Activated naive CD4-positive, alpha-beta T cell treated with anti-CD3 and anti-CD28 coated beads for 36 hours (primary cell): ENCODE measurements at regions of chr14 and their contacts with region 1.

Region 1: DNA sequence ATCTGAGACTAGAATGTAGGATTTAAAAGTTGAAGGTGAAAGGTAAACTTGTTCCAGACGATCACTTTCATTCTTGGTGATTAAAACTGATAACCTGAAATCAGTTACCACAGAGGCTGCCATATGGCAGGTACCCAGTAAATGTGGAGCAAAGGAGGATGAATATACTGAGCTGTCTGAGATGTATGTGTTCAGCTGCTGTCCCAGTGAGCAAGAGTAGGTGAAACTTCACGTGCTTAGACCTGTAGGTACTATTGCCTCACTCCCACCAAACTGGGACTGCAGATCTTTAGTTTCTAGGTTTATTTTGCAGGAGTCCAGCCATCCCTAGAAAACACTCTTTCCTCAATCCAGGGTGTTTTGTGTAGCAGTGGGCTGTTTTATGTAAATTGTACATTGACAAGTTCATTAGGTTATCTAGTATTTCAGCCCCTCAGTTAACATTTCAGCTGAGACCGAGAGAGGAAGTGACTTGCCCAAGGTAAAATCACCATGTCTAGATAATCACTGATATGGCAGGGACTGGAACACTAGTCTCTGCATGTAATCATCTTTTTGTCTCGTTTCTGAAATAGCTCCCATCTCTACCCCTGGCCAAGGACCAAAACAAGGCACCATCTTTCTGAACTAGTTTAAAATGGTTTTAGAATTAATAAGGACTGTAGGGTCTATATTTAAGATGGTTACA is 62.7 kb downstream of the ATG14 start:
- DNase-seq: peak; percentile 22
- H3K4me3 Mint-ChIP-seq: no peak overlapping the region
- H3K27ac Mint-ChIP-seq: no peak overlapping the region
- H3K4me1 Mint-ChIP-seq: peaks cover 53% of the 10 kb centered on the region
- H3K27me3 Mint-ChIP-seq: no peaks in the 10 kb centered on the region

Region 2: DNA sequence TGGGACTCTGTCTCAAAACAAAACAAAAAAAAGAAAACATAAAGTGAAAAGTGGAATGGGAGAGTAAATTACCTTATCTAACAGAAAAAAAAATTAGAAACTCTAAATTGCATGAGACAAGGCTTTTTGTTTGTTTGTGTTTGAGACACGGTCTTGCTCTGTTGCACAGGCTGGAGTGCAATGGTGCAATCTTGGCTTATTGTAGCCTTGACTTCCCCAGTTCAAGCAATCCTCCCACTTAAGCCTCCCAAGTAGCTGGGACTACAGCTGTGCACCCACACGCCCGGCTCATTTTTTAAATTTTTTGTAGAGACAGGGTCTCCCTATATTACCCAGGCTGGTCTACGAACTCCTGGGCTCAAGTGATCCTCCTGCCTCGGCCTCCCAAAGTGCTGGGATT is 95.6 kb before region 1 on chr14:
- CTCF ChIA-PET with region 1: no interaction called
- intact Hi-C with region 1: no loop called
- DNase-seq: no peak
- H3K4me3 Mint-ChIP-seq: no peak overlapping the region
- H3K27ac Mint-ChIP-seq: no peak overlapping the region
- H3K4me1 Mint-ChIP-seq: peaks cover 2% of the 10 kb centered on the region
- H3K27me3 Mint-ChIP-seq: no peaks in the 10 kb centered on the region

Region 3: GRCh38 chr14:55306938-55307589 is 41.8 kb before region 1 on chr14:
- CTCF ChIA-PET with region 1: interaction called, 6 read pairs
- intact Hi-C with region 1: loop called (anchors 2 kb)
- DNase-seq: no peak
- H3K4me3 Mint-ChIP-seq: no peak overlapping the region
- H3K27ac Mint-ChIP-seq: no peak overlapping the region
- H3K4me1 Mint-ChIP-seq: peaks cover 26% of the 10 kb centered on the region
- H3K27me3 Mint-ChIP-seq: no peaks in the 10 kb centered on the region